Left colon (tissue), 2 donors: ENCODE measurements at regions of chr5 and their contacts with region 1.

Region 1: DNA sequence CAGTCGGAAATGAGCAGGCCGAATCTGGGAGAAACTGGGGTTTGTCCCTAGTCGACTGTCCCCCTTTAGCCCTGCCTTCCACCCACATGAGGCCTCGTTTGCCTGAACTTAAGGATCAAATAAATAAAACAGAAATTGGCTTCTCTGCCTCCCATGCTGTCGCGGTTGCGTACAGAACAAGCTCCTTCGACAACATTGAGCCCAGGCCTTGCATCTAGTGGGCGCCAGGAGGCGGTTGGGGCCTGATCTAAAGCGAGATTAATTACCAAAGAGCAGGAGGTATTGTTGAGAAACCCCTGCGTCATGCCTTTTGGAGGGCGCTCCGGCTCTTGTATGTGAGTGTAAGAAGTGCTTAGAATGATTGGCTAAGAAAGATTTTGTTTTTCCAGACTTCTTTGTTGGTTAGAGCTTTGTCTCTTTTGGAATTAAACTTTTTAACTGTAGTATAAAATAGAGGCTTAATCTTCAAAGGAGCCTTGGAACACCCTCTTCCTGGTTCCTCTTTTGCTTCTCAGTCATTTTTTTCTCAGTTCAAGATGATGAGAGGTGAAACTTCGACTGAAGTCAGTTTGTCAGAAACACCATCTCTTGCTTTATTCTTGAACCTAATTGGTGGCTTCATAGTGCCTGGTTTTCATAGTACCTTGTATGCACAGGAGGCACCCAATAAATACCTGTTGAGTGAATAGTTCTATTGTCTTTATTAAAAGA is 827 bp downstream of the ATP6V0E1 start:
- DNase-seq: peak; percentile 72 to 73
- ATAC-seq: peak; percentile 70

Region 2: GRCh38 chr5:172714491-172715421 is 269.6 kb before region 1 on chr5:
- intact Hi-C with region 1: no loop called
- DNase-seq: peak; percentile 77 to 81
- ATAC-seq: peak; percentile 76

Region 3: DNA sequence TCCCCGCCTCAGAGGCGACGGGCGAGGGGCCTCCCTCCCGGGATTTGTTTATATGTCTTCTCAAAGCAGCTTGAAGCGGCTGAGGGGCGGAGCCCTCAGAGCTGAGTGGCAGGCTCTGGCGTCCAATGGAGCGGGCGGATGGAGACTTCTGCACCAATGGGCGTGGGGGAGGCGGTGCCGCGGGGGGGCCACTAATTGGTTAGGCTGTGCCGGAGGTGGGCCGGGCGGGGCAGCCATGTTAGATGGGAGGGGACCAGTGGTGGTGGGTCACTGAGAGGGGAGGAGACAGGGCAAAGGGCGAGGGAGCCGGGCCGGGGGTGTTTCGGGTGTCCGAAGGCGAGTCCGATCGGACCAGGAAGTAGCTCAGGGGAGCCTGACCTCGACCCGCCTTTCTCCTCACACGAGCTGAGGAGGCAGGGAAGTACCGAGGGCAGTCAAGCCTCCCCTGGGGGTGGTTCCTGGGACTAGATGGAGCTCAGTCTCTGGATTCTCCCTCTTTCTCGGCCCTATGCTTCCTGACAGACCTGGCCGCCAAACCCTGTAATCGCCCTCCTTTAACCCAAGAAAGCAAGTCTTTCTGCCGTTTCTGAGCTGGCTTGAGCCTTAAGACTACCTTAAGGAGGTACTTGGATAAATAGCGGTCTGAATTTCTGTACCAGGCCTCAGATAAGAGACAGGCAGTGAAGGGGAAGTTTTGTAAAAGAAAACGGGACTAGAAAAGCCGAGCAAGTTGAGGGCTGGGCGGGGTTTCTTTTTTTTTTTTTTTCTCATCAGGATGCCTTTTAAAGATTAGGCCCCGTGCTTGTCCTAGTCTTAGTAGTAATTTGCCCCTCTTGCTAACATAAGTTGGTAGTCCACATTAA is 72.9 kb after region 1 on chr5:
- intact Hi-C with region 1: loop called in 1 of 2 experiments (anchors 10 kb)
- DNase-seq: peak; percentile 99 to 100
- ATAC-seq: peak; percentile 88

Region 4: DNA sequence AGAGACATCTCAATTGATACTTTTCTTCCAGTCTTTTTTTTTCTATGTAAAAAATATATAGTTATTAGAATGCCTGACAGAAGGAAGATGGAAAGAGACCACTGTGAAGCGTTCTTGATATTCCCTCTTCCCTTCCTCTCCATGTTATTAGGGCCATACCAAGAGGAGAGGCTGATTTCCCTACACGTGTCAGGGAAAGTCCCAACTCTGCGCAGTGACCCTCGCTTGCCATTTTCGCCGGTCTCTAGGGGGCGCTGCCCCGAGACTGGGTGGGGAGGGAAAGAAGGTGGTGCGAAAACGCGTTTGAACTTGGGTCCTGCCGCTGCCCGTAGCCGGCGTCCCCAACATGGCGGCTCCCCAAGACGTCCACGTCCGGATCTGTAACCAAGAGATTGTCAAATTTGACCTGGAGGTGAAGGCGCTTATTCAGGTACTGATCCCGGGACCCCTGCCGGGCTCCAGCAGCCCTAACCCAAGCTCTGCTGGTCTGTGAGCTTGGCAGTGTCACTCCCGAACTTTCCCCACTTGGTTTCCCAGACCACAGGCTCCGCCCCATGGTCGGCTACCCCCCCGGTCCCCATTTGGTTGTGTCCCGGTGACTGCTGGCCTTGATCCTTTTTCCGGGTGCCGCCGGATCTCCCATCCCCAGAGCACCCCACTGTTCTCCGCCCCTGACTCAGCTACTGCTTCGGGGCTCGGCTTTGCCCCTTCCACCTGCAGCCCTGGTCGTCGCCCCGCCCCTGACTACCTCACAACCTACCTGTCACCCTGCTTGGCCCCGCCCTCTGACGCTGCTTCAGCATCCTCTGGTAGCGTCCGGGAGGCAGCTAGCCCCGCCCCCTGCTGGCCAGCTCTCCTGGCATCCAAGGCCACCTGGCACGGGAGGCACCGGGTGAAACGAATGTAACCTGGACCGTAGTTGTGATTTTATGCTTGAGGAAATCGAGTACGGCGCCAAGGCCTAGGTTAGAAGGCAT is 160.1 kb after region 1 on chr5 and contains the start of gene BNIP1:
- intact Hi-C with region 1: loop called in 1 of 2 experiments (anchors 10 kb)
- DNase-seq: peak; percentile 99 to 100
- ATAC-seq: peak; percentile 98
- total RNA-seq, gene BNIP1: 7.5 to 11.8 TPM